CD8-positive, alpha-beta T cell (primary cell): ENCODE measurements at regions of chr11 and their contacts with region 1.

Region 1: GRCh38 chr11:67353317-67354074 is at the start of gene POLD4:
- DNase-seq: peak; percentile 87 to 98 (median 95)
- ATAC-seq: peak; percentile 87
- H3K4me3 ChIP-seq: peak within 1 kb of the TSS; percentile 83 to 88
- H3K4me3 Mint-ChIP-seq: peak within 1 kb of the TSS; percentile 99
- H3K27ac ChIP-seq: peak within 1 kb of the TSS; percentile 94 to 99
- H3K27ac Mint-ChIP-seq: peak within 1 kb of the TSS; percentile 100
- H3K4me1 ChIP-seq: peaks cover 45% of the 10 kb centered on the region
- H3K4me1 Mint-ChIP-seq: peaks cover 59% of the 10 kb centered on the region
- H3K27me3 ChIP-seq: no peaks in the 10 kb centered on the region
- H3K27me3 Mint-ChIP-seq: no peaks in the 10 kb centered on the region
- CTCF ChIP-seq: no peak
- total RNA-seq, gene POLD4: 32.4 to 41.9 TPM

Region 2: GRCh38 chr11:67053896-67054842 is 299.3 kb before region 1 on chr11:
- CTCF ChIA-PET with region 1: no interaction called
- POLR2A ChIA-PET with region 1: no interaction called
- intact Hi-C with region 1: no loop called
- DNase-seq: peak in 5 of 9 experiments; percentile 28 to 57 (median 38)
- ATAC-seq: peak; percentile 74
- H3K4me3 ChIP-seq: no peak overlapping the region
- H3K4me3 Mint-ChIP-seq: no peak overlapping the region
- H3K27ac ChIP-seq: no peak overlapping the region
- H3K27ac Mint-ChIP-seq: no peak overlapping the region
- H3K4me1 ChIP-seq: peaks cover 10% of the 10 kb centered on the region
- H3K4me1 Mint-ChIP-seq: peaks cover 13% of the 10 kb centered on the region
- H3K27me3 ChIP-seq: peaks cover 0 to 4% of the 10 kb centered on the region in 2 experiments
- H3K27me3 Mint-ChIP-seq: peaks cover 15% of the 10 kb centered on the region
- CTCF ChIP-seq: peak; percentile 27

Region 3: DNA sequence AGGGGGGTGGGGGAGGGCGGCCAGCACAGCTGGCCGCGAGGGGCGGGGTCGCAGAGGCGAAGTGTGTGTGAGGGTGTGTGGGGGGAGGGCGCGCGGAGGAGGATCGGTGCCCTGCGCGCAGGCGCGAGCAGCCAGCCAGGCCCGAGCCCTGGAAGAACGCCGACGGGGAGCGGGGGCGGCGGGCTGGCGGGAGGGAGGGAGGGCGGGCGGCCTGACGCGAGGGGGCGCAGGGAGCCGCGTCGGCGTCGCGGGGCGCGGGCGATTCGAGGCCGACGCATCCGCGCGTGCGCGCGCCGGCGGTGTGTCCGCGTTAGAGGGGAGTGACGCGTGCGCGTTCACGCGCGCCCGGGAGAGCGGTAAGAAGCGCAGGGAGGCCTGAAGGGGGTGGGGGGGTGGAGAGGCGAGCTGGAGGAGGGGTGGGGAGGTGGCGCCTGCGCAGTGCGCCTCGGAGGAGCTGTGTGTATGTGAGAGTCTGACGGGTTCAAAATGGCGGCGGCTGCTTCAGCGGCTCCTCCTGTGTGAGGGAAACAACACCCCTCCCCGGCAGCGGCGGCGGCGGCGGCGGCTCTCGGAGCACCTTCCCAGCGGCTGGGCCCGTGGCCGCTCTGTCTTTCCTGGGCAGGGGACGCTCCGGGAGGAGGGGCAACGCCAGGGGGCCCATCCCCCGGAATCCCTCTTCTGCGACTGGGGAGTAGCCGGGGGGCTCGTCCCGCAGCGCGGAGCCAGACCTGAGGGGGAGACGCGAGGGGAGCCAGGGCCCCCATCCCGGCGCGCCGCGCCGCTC is 234.5 kb before region 1 on chr11 and contains the start of gene KDM2A:
- CTCF ChIA-PET with region 1: no interaction called
- POLR2A ChIA-PET with region 1: interaction called, 3 read pairs
- intact Hi-C with region 1: loop called in 1 of 2 experiments (anchors 10 kb)
- DNase-seq: peak; percentile 98 to 100 (median 99)
- ATAC-seq: peak; percentile 81
- H3K4me3 ChIP-seq: peak within 1 kb of the TSS; percentile 62 to 80
- H3K4me3 Mint-ChIP-seq: peak within 1 kb of the TSS; percentile 97
- H3K27ac ChIP-seq: peak within 1 kb of the TSS; percentile 78 to 92
- H3K27ac Mint-ChIP-seq: peak within 1 kb of the TSS; percentile 96
- H3K4me1 ChIP-seq: peaks cover 34% of the 10 kb centered on the region
- H3K4me1 Mint-ChIP-seq: peaks cover 40% of the 10 kb centered on the region
- H3K27me3 ChIP-seq: no peaks in the 10 kb centered on the region
- H3K27me3 Mint-ChIP-seq: no peaks in the 10 kb centered on the region
- CTCF ChIP-seq: no peak
- total RNA-seq, gene KDM2A: 412 to 431 TPM

Region 4: DNA sequence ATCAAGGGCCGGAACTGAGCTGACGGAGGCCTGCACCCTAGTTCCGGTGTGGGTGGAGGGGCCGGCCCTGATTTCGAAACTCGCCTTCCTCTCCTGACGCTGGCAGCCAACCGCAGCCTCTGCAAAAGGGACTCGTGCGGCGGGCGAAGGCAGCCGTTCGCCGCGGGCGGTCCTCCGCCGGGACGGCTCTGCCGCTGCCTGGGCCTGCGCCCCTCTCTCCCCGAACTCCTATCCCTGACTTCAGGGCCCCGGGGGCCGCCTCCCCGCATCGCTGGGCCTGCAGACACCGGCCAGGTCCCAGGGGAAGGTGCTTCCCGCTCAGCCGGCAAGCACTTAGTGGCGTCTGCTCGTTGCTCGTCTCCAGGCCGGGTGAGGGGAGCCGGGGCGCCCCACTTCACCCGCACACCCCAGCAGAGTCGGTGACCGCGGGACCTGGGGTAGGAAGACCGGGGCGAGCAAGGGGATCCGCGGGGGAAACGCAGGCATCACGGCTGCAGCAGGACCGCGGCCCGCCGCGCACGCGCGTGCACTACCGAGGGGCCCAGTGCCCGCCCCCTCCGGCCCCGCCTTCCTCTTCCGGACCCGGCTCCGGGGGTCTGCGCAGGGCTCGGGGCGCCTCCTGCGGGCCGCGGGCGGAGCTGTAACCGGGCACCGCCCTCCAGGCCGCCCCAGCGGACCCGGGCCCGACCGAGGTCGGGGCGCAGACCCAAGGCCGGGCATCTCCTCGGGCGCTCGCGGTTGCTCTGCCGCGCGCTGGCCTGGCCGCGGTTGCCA is 64.9 kb before region 1 on chr11:
- CTCF ChIA-PET with region 1: interaction called, 7 read pairs
- POLR2A ChIA-PET with region 1: interaction called, 10 read pairs
- intact Hi-C with region 1: loop called in 1 of 2 experiments (anchors 1 kb)
- DNase-seq: peak; percentile 78 to 97 (median 92)
- ATAC-seq: peak; percentile 67
- H3K4me3 ChIP-seq: peak overlapping the region; percentile 90 to 92
- H3K4me3 Mint-ChIP-seq: peak overlapping the region; percentile 80
- H3K27ac ChIP-seq: peak overlapping the region; percentile 79 to 98
- H3K27ac Mint-ChIP-seq: peak overlapping the region; percentile 98
- H3K4me1 ChIP-seq: peaks cover 64% of the 10 kb centered on the region
- H3K4me1 Mint-ChIP-seq: peaks cover 59% of the 10 kb centered on the region
- H3K27me3 ChIP-seq: no peaks in the 10 kb centered on the region
- H3K27me3 Mint-ChIP-seq: no peaks in the 10 kb centered on the region
- CTCF ChIP-seq: peak; percentile 58

Region 5: GRCh38 chr11:67382276-67383136 is 29.0 kb after region 1 on chr11:
- CTCF ChIA-PET with region 1: interaction called, 1,319 read pairs
- POLR2A ChIA-PET with region 1: interaction called, 63 read pairs
- intact Hi-C with region 1: loop called (anchors 1 kb)
- DNase-seq: peak; percentile 72 to 90 (median 86)
- ATAC-seq: peak; percentile 98
- H3K4me3 ChIP-seq: no peak overlapping the region
- H3K4me3 Mint-ChIP-seq: no peak overlapping the region
- H3K27ac ChIP-seq: no peak overlapping the region
- H3K27ac Mint-ChIP-seq: no peak overlapping the region
- H3K4me1 ChIP-seq: peaks cover 5% of the 10 kb centered on the region
- H3K4me1 Mint-ChIP-seq: peaks cover 5% of the 10 kb centered on the region
- H3K27me3 ChIP-seq: no peaks in the 10 kb centered on the region
- H3K27me3 Mint-ChIP-seq: no peaks in the 10 kb centered on the region
- CTCF ChIP-seq: peak; percentile 90

Region 6: GRCh38 chr11:67420646-67421420 is 67.3 kb after region 1 on chr11:
- CTCF ChIA-PET with region 1: interaction called, 3 read pairs
- POLR2A ChIA-PET with region 1: interaction called, 4 read pairs
- intact Hi-C with region 1: loop called in 1 of 2 experiments (anchors 1 kb)
- DNase-seq: peak; percentile 97 to 100 (median 99)
- ATAC-seq: peak; percentile 85
- H3K4me3 ChIP-seq: peak overlapping the region; percentile 49 to 50
- H3K4me3 Mint-ChIP-seq: peak overlapping the region; percentile 86
- H3K27ac ChIP-seq: peak overlapping the region; percentile 55 to 68
- H3K27ac Mint-ChIP-seq: peak overlapping the region; percentile 91
- H3K4me1 ChIP-seq: peaks cover 50% of the 10 kb centered on the region
- H3K4me1 Mint-ChIP-seq: peaks cover 47% of the 10 kb centered on the region
- H3K27me3 ChIP-seq: no peaks in the 10 kb centered on the region
- H3K27me3 Mint-ChIP-seq: no peaks in the 10 kb centered on the region
- CTCF ChIP-seq: no peak

Region 7: DNA sequence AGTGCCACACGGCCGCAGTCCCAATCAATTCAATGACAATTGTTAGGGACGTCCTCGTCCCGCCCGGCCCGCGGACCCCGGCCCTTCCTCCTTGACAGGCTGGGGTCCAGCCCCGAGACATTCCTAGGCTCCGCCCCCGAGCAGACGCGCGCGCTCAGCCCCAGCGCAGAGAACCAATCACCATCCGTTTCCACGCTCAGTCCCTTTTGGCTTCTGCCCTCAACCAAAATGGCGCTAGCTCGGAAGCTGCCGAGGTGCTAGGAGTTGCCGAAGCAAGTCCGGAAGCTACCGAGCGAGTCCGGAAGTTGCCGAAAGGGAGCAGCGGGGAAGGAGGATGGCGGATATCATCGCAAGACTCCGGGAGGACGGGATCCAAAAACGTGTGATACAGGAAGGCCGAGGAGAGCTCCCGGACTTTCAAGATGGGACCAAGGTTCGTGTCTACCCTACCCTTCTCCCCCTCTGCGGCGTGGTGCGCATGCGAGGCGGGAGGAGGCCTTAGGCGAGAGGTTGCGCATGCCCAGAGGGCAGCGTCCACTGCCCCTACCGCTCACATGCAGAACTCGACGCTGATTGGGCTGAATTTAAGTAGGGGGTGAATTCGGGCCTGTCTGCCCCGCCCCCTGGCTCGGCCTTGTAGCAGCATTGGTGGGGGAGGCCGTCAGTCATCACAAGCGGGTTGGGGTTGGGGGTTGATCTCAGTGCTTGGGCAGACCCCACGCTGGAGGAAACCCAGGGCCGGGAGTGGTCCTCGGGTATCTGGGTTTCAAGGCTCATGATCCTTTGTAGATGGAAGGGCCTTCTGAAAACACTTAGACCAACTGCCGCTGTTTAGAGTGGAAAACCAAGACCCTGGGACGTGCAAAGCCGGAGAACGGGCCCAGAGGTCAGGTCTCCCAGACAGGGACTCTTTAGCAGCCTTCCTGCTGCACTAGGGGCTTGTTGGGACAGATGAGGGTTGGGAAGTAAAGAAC is 129.6 kb after region 1 on chr11 and contains the start of gene AIP:
- CTCF ChIA-PET with region 1: interaction called, 3 read pairs
- POLR2A ChIA-PET with region 1: interaction called, 14 read pairs
- intact Hi-C with region 1: loop called (anchors 1 to 5 kb)
- DNase-seq: peak; percentile 94 to 99 (median 97)
- ATAC-seq: peak; percentile 76
- H3K4me3 ChIP-seq: peak within 1 kb of the TSS; percentile 62 to 73
- H3K4me3 Mint-ChIP-seq: peak within 1 kb of the TSS; percentile 93
- H3K27ac ChIP-seq: peak within 1 kb of the TSS; percentile 81 to 89
- H3K27ac Mint-ChIP-seq: peak within 1 kb of the TSS; percentile 99
- H3K4me1 ChIP-seq: peaks cover 48% of the 10 kb centered on the region
- H3K4me1 Mint-ChIP-seq: peaks cover 54% of the 10 kb centered on the region
- H3K27me3 ChIP-seq: no peaks in the 10 kb centered on the region
- H3K27me3 Mint-ChIP-seq: no peaks in the 10 kb centered on the region
- CTCF ChIP-seq: no peak
- total RNA-seq, gene AIP: 109 to 111 TPM

Region 8: GRCh38 chr11:67705264-67705663 is 351.8 kb after region 1 on chr11:
- CTCF ChIA-PET with region 1: no interaction called
- POLR2A ChIA-PET with region 1: no interaction called
- intact Hi-C with region 1: loop called in 1 of 2 experiments (anchors 10 kb)
- DNase-seq: no peak
- ATAC-seq: no peak
- H3K4me3 ChIP-seq: no peak overlapping the region
- H3K4me3 Mint-ChIP-seq: no peak overlapping the region
- H3K27ac ChIP-seq: no peak overlapping the region
- H3K27ac Mint-ChIP-seq: no peak overlapping the region
- H3K4me1 ChIP-seq: no peaks in the 10 kb centered on the region
- H3K4me1 Mint-ChIP-seq: no peaks in the 10 kb centered on the region
- H3K27me3 ChIP-seq: no peaks in the 10 kb centered on the region
- H3K27me3 Mint-ChIP-seq: peaks cover 3% of the 10 kb centered on the region
- CTCF ChIP-seq: no peak